PC-9 (cell line): ENCODE measurements at regions of chr2 and their contacts with region 1.

Region 1: GRCh38 chr2:178478439-178479274 is at the start of gene FKBP7:
- DNase-seq: peak; percentile 71 to 85
- H3K4me3 ChIP-seq: peak within 1 kb of the TSS; percentile 77
- H3K27ac ChIP-seq: peak within 1 kb of the TSS; percentile 56
- H3K4me1 ChIP-seq: peaks cover 45% of the 10 kb centered on the region
- H3K27me3 ChIP-seq: no peaks in the 10 kb centered on the region
- CTCF ChIP-seq: peak; percentile 87
- total RNA-seq, gene FKBP7: 3.8 and 6.1 TPM in 2 replicates

Region 2: GRCh38 chr2:177296040-177296439 is 1182.6 kb before region 1 on chr2:
- CTCF ChIA-PET with region 1: interaction called, 10 read pairs
- POLR2A ChIA-PET with region 1: no interaction called
- intact Hi-C with region 1: no loop called
- DNase-seq: no peak
- H3K4me3 ChIP-seq: no peak overlapping the region
- H3K27ac ChIP-seq: no peak overlapping the region
- H3K4me1 ChIP-seq: no peaks in the 10 kb centered on the region
- H3K27me3 ChIP-seq: no peaks in the 10 kb centered on the region
- CTCF ChIP-seq: peak; percentile 80

Region 3: GRCh38 chr2:178450774-178451525 is 27.7 kb before region 1 on chr2 and contains the starts of genes PJVK and PRKRA:
- CTCF ChIA-PET with region 1: interaction called, 3 read pairs
- POLR2A ChIA-PET with region 1: interaction called, 8 read pairs
- intact Hi-C with region 1: loop called (anchors 1 kb)
- DNase-seq: peak; percentile 96 to 100
- H3K4me3 ChIP-seq: peak within 1 kb of the TSS; percentile 78
- H3K27ac ChIP-seq: peak within 1 kb of the TSS; percentile 93
- H3K4me1 ChIP-seq: peaks cover 22% of the 10 kb centered on the region
- H3K27me3 ChIP-seq: no peaks in the 10 kb centered on the region
- CTCF ChIP-seq: no peak
- total RNA-seq, gene PJVK: 14.6 and 16.9 TPM in 2 replicates
- total RNA-seq, gene PRKRA: 87.0 and 93.3 TPM in 2 replicates

Region 4: DNA sequence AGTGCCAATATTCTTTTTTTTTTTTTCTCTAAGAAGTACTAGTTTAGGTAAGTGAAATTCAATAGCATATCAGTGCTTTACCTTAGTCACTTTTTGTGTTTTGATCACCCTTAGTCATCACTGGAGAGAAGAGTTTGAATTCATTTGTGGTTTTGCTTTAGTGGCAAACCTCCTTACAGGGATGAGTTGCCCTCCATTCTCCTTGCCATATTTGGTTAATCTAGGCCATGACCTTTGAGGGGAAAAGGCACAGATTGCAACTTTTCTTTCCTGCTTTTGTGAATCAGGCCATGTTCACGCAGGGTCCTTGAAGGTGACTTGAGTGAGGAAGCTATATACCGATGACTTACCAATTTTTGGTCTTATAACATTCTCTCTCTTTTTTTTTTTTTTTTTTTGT is 36.0 kb after region 1 on chr2:
- CTCF ChIA-PET with region 1: interaction called, 5 read pairs
- POLR2A ChIA-PET with region 1: interaction called, 16 read pairs
- intact Hi-C with region 1: no loop called
- DNase-seq: peak in 1 of 2 experiments; percentile 62
- H3K4me3 ChIP-seq: no peak overlapping the region
- H3K27ac ChIP-seq: peak overlapping the region; percentile 53
- H3K4me1 ChIP-seq: peaks cover 26% of the 10 kb centered on the region
- H3K27me3 ChIP-seq: no peaks in the 10 kb centered on the region
- CTCF ChIP-seq: no peak

Region 5: GRCh38 chr2:178522950-178523595 is 44.4 kb after region 1 on chr2:
- CTCF ChIA-PET with region 1: no interaction called
- POLR2A ChIA-PET with region 1: interaction called, 3 read pairs
- intact Hi-C with region 1: loop called (anchors 1 kb)
- DNase-seq: peak; percentile 85 to 92
- H3K4me3 ChIP-seq: peak overlapping the region; percentile 78
- H3K27ac ChIP-seq: peak overlapping the region; percentile 30
- H3K4me1 ChIP-seq: peaks cover 10% of the 10 kb centered on the region
- H3K27me3 ChIP-seq: no peaks in the 10 kb centered on the region
- CTCF ChIP-seq: peak; percentile 97

Region 6: GRCh38 chr2:178761759-178762371 is 283.2 kb after region 1 on chr2:
- CTCF ChIA-PET with region 1: no interaction called
- POLR2A ChIA-PET with region 1: no interaction called
- intact Hi-C with region 1: loop called (anchors 5 kb)
- DNase-seq: peak; percentile 46 to 75
- H3K4me3 ChIP-seq: no peak overlapping the region
- H3K27ac ChIP-seq: no peak overlapping the region
- H3K4me1 ChIP-seq: peaks cover 11% of the 10 kb centered on the region
- H3K27me3 ChIP-seq: no peaks in the 10 kb centered on the region
- CTCF ChIP-seq: peak; percentile 98

Region 7: GRCh38 chr2:178914259-178914849 is 435.7 kb after region 1 on chr2:
- CTCF ChIA-PET with region 1: no interaction called
- POLR2A ChIA-PET with region 1: no interaction called
- intact Hi-C with region 1: loop called (anchors 2 kb)
- DNase-seq: peak; percentile 83 to 84
- H3K4me3 ChIP-seq: no peak overlapping the region
- H3K27ac ChIP-seq: no peak overlapping the region
- H3K4me1 ChIP-seq: peaks cover 30% of the 10 kb centered on the region
- H3K27me3 ChIP-seq: no peaks in the 10 kb centered on the region
- CTCF ChIP-seq: peak; percentile 99